CD8-positive, alpha-beta T cell (primary cell): ENCODE measurements at regions of chr22 and their contacts with region 1.

Region 1: DNA sequence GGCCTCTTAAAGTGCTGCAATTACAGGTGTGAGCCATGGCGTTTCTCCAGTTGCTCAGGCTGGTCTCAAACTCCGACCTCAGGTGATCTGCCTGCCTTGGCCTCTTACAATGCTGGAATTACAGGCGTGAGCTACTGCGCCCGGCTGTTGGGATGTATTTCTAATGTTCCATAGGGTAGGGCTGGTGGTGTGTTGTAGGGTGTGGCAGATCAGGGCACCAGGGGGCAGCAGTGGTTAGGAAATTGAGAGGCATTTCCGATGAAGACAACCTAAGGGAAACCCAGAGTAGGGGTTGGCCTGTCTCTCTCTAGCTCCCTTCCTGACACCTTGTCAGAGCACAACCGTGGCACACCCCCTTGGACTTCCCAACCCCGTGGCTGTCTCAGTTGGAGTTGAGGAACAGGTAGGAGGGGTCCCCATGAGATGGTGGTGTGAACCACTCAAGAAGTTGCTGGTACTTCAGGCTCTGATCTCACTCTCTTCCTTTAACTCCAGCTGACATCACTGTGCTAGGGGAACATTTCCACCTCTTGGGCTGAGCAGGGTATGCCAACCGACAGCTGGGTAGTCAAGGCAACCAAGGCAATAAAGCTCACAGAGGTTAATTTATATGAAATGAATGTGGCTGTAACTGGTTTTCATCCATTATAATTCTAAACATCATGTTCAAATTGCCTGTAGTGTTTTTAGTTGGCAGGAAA is 33.0 kb downstream of the YWHAH start:
- DNase-seq: peak; percentile 55 to 83 (median 76)
- ATAC-seq: peak; percentile 95
- H3K4me3 ChIP-seq: no peak overlapping the region
- H3K4me3 Mint-ChIP-seq: no peak overlapping the region
- H3K27ac ChIP-seq: no peak overlapping the region
- H3K27ac Mint-ChIP-seq: no peak overlapping the region
- H3K4me1 ChIP-seq: no peaks in the 10 kb centered on the region
- H3K4me1 Mint-ChIP-seq: no peaks in the 10 kb centered on the region
- H3K27me3 ChIP-seq: no peaks in the 10 kb centered on the region
- H3K27me3 Mint-ChIP-seq: no peaks in the 10 kb centered on the region
- CTCF ChIP-seq: peak; percentile 62

Region 2: DNA sequence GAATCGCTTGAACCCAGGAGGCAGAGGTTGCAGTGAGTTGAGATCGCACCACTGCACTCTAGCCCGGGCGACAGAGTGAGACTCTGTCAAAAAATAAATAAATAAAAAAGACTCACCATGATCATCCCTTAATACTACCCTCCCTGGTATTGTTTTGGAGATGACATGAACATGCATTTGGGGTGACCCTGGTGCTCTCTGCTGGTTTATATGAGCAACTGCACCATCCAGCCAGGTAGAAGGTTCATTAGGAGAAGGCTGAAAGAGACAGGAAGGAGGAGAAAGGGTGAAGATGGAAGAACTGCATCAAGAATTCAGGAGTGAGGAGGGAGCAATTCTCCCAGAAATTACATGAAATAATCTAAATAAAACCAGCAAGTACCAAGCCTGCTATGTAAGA is 103.6 kb after region 1 on chr22:
- CTCF ChIA-PET with region 1: interaction called, 8 read pairs
- POLR2A ChIA-PET with region 1: no interaction called
- intact Hi-C with region 1: loop called (anchors 1 kb)
- DNase-seq: peak in 3 of 9 experiments; percentile 16 to 59 (median 50)
- ATAC-seq: peak; percentile 55
- H3K4me3 ChIP-seq: no peak overlapping the region
- H3K4me3 Mint-ChIP-seq: no peak overlapping the region
- H3K27ac ChIP-seq: no peak overlapping the region
- H3K27ac Mint-ChIP-seq: no peak overlapping the region
- H3K4me1 ChIP-seq: no peaks in the 10 kb centered on the region
- H3K4me1 Mint-ChIP-seq: no peaks in the 10 kb centered on the region
- H3K27me3 ChIP-seq: no peaks in the 10 kb centered on the region
- H3K27me3 Mint-ChIP-seq: peaks cover 10% of the 10 kb centered on the region
- CTCF ChIP-seq: peak; percentile 37

Region 3: GRCh38 chr22:32265882-32266767 is 288.8 kb after region 1 on chr22:
- CTCF ChIA-PET with region 1: interaction called, 23 read pairs
- POLR2A ChIA-PET with region 1: no interaction called
- intact Hi-C with region 1: loop called (anchors 1 kb)
- DNase-seq: peak; percentile 27 to 76 (median 62)
- ATAC-seq: peak; percentile 63
- H3K4me3 ChIP-seq: no peak overlapping the region
- H3K4me3 Mint-ChIP-seq: no peak overlapping the region
- H3K27ac ChIP-seq: no peak overlapping the region
- H3K27ac Mint-ChIP-seq: no peak overlapping the region
- H3K4me1 ChIP-seq: no peaks in the 10 kb centered on the region
- H3K4me1 Mint-ChIP-seq: peaks cover 7% of the 10 kb centered on the region
- H3K27me3 ChIP-seq: no peaks in the 10 kb centered on the region
- H3K27me3 Mint-ChIP-seq: peaks cover 8% of the 10 kb centered on the region
- CTCF ChIP-seq: peak; percentile 89

Region 4: GRCh38 chr22:32796865-32797573 is 819.7 kb after region 1 on chr22:
- CTCF ChIA-PET with region 1: no interaction called
- POLR2A ChIA-PET with region 1: no interaction called
- intact Hi-C with region 1: loop called in 1 of 2 experiments (anchors 5 kb)
- DNase-seq: peak; percentile 3 to 67 (median 54)
- ATAC-seq: peak; percentile 61
- H3K4me3 ChIP-seq: no peak overlapping the region
- H3K4me3 Mint-ChIP-seq: no peak overlapping the region
- H3K27ac ChIP-seq: no peak overlapping the region
- H3K27ac Mint-ChIP-seq: no peak overlapping the region
- H3K4me1 ChIP-seq: no peaks in the 10 kb centered on the region
- H3K4me1 Mint-ChIP-seq: peaks cover 5% of the 10 kb centered on the region
- H3K27me3 ChIP-seq: peaks cover 0 to 4% of the 10 kb centered on the region in 2 experiments
- H3K27me3 Mint-ChIP-seq: peaks cover 27% of the 10 kb centered on the region
- CTCF ChIP-seq: peak; percentile 69

Region 5: GRCh38 chr22:33049119-33049729 is 1071.9 kb after region 1 on chr22:
- CTCF ChIA-PET with region 1: no interaction called
- POLR2A ChIA-PET with region 1: no interaction called
- intact Hi-C with region 1: loop called in 1 of 2 experiments (anchors 5 kb)
- DNase-seq: peak in 8 of 9 experiments; percentile 18 to 66 (median 53)
- ATAC-seq: no peak
- H3K4me3 ChIP-seq: no peak overlapping the region
- H3K4me3 Mint-ChIP-seq: no peak overlapping the region
- H3K27ac ChIP-seq: no peak overlapping the region
- H3K27ac Mint-ChIP-seq: no peak overlapping the region
- H3K4me1 ChIP-seq: no peaks in the 10 kb centered on the region
- H3K4me1 Mint-ChIP-seq: no peaks in the 10 kb centered on the region
- H3K27me3 ChIP-seq: peaks cover 0 to 4% of the 10 kb centered on the region in 2 experiments
- H3K27me3 Mint-ChIP-seq: peaks cover 29% of the 10 kb centered on the region
- CTCF ChIP-seq: peak; percentile 71